CD14-positive monocyte (primary cell): ENCODE measurements at regions of chr2 and their contacts with region 1.

Region 1: DNA sequence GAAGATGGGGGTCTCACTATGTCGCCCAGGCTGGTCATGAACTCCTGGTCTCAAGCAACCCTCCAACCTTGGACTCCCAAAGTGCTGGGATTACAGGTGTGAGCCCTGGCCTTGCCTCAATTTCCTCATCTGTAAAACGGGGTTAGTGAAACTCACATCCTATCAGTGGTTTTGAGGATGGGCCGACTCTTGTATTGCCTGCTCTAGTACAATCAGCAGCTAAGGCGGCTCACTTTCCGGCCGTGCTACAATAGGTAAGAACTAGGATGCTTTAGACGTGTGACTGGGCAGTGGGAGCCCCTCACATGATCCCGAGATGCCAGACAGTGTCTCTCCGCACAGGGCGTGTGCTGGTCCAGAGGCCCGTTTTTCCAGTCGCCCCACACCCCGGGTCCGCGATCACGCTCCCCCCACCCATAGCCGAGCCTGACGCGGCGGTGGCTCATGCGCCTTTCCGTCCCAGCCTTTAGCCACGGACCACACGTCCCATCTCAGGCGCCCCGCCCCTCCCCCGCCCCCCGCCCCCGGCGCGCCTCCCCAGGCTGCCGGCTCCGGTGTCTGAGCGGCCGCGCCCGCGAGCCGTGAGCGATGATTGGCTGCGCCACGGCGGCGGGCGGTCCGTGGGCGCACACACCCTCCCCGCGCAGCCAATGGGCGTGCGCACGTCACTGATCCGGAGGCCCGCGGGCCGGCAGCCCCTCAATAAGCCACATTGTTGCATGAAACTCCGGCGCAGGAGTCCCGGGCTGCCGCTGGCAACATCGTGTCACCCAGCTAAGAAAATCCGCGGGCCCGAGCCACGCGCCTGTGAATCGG is at the start of gene HK2:
- DNase-seq: peak; percentile 92 to 93 (median 93)
- H3K4me3 ChIP-seq: peak within 1 kb of the TSS; percentile 79 to 91 (median 85)
- H3K4me3 Mint-ChIP-seq: peak within 1 kb of the TSS; percentile 98 to 99
- H3K27ac ChIP-seq: peak within 1 kb of the TSS; percentile 91 to 98
- H3K27ac Mint-ChIP-seq: peak within 1 kb of the TSS; percentile 93 to 99 (median 98)
- H3K4me1 ChIP-seq: peaks cover 44 to 56% of the 10 kb centered on the region in 2 donors
- H3K4me1 Mint-ChIP-seq: peaks cover 48% of the 10 kb centered on the region
- H3K27me3 ChIP-seq: no peaks in the 10 kb centered on the region
- H3K27me3 Mint-ChIP-seq: peaks cover 0 to 3% (median 0%) of the 10 kb centered on the region in 3 donors
- CTCF ChIP-seq: no peak
- polyA plus RNA-seq, gene HK2: 20.3 to 46.7 (median 29.8) TPM

Region 2: DNA sequence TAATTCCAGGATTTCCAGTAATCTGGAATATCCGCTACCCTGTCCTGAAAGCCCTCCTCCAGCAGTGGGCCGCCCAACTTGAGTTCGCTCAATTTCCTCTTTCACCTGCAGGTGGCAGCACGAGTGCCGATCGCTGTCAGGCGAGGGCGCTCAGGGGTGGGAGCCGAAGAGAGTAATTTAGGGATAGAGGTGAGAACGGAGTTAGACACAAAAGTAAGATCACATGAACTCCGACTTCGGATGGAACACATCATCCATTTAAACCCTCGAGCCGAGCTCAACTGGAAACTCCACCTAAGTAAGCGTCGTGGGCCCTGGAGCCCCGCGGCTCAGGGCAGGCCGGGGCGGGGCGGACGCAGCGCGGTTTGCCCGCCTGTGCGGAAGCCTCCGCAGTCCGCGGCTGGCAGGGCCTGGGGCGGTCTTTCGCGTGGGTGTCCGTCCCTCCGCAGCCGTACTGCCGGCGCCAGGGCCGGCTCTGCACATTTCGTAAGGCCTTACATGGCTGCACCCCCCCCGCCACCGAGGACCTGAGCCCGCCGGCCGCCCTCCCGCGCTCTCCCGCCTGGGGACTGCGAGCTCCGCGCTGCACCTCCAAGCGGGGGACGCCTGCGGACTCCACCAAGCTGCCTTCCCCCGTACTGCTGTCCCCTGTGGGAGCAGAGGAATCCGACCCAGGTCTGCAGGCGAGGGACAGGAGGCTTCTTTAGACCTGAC is 118.4 kb before region 1 on chr2:
- intact Hi-C with region 1: loop called in 1 of 2 experiments (anchors 5 kb)
- DNase-seq: peak; percentile 72 to 77 (median 72)
- H3K4me3 ChIP-seq: peak overlapping the region; percentile 38 to 75 (median 54)
- H3K4me3 Mint-ChIP-seq: peak overlapping the region; percentile 91 to 96
- H3K27ac ChIP-seq: peak overlapping the region; percentile 40 to 77
- H3K27ac Mint-ChIP-seq: peak overlapping the region; percentile 47 to 94 (median 89)
- H3K4me1 ChIP-seq: peaks cover 6 to 9% of the 10 kb centered on the region in 2 donors
- H3K4me1 Mint-ChIP-seq: peaks cover 9% of the 10 kb centered on the region
- H3K27me3 ChIP-seq: peaks cover 0 to 5% of the 10 kb centered on the region in 2 donors
- H3K27me3 Mint-ChIP-seq: peaks cover 3 to 5% (median 4%) of the 10 kb centered on the region in 3 donors
- CTCF ChIP-seq: peak; percentile 95

Region 3: GRCh38 chr2:74740389-74741075 is 93.1 kb before region 1 on chr2:
- intact Hi-C with region 1: loop called in 1 of 2 experiments (anchors 5 kb)
- DNase-seq: peak; percentile 97 to 98 (median 98)
- H3K4me3 ChIP-seq: peak overlapping the region in 1 of 3 experiments; percentile 54
- H3K4me3 Mint-ChIP-seq: peak overlapping the region in 1 of 2 donors; percentile 66
- H3K27ac ChIP-seq: peak overlapping the region; percentile 92 to 94
- H3K27ac Mint-ChIP-seq: peak overlapping the region; percentile 92 to 97 (median 95)
- H3K4me1 ChIP-seq: peaks cover 32 to 36% of the 10 kb centered on the region in 2 donors
- H3K4me1 Mint-ChIP-seq: peaks cover 40% of the 10 kb centered on the region
- H3K27me3 ChIP-seq: no peaks in the 10 kb centered on the region
- H3K27me3 Mint-ChIP-seq: peaks cover 0 to 2% (median 0%) of the 10 kb centered on the region in 3 donors
- CTCF ChIP-seq: no peak

Region 4: DNA sequence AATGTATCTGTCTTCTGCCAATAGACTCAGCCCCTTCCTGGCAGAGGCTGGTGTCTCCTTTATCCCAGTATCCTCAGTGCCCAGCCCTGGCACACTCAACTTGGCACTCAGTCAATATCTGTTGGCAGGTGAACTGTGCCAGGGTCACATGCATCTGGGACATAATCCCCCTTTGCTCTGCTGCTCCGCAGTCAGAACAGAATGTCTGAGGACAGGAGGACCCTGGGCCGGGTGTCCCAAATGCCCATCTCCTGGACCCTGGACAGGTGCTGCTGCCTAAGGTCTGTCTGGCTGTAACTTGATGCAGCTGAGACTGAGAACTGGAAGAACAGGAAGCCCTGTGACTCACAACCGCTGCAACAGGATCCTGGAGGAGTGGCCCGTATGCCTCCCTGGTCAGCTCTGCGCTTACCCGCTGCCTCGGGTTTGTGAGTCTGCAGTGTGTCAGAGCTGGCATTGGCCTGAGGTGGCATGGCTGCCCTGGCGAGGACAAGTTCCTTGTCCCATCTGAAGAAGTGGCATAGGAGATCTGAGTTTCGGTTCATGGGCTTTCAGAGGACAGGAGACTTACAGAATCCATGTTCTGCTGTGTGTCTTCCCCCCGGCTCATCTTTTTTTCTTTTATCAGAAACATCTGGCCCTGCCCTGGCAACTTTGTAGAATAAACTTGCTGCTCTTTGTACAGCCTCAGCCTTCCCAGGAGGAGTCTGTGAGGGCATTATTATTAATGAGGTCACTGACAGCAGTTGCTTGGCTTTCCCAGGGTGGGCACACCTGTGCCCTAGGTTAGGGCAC is 11.8 kb after region 1 on chr2:
- intact Hi-C with region 1: loop called in 1 of 2 experiments (anchors 1 kb)
- DNase-seq: peak; percentile 95 to 98 (median 97)
- H3K4me3 ChIP-seq: peak overlapping the region in 1 of 3 experiments; percentile 54
- H3K4me3 Mint-ChIP-seq: peak overlapping the region; percentile 35 to 56
- H3K27ac ChIP-seq: peak overlapping the region; percentile 94 to 96
- H3K27ac Mint-ChIP-seq: peak overlapping the region; percentile 96 to 100 (median 99)
- H3K4me1 ChIP-seq: peaks cover 99 to 100% of the 10 kb centered on the region in 2 donors
- H3K4me1 Mint-ChIP-seq: peaks cover 98% of the 10 kb centered on the region
- H3K27me3 ChIP-seq: no peaks in the 10 kb centered on the region
- H3K27me3 Mint-ChIP-seq: peaks cover 0 to 2% (median 0%) of the 10 kb centered on the region in 3 donors
- CTCF ChIP-seq: no peak

Region 5: GRCh38 chr2:75053484-75054112 is 220.0 kb after region 1 on chr2:
- intact Hi-C with region 1: no loop called
- DNase-seq: peak in 1 of 3 donors; percentile 5
- H3K4me3 ChIP-seq: no peak overlapping the region
- H3K4me3 Mint-ChIP-seq: no peak overlapping the region
- H3K27ac ChIP-seq: no peak overlapping the region
- H3K27ac Mint-ChIP-seq: no peak overlapping the region
- H3K4me1 ChIP-seq: no peaks in the 10 kb centered on the region
- H3K4me1 Mint-ChIP-seq: no peaks in the 10 kb centered on the region
- H3K27me3 ChIP-seq: no peaks in the 10 kb centered on the region
- H3K27me3 Mint-ChIP-seq: peaks cover 0 to 3% (median 1%) of the 10 kb centered on the region in 3 donors
- CTCF ChIP-seq: peak; percentile 46